CD4-positive, alpha-beta T cell (primary cell): ENCODE measurements at regions of chr17 and their contacts with region 1.

Region 1: GRCh38 chr17:8222630-8223356 is 12.4 kb upstream of the AURKB start:
- DNase-seq: peak; percentile 82 to 94 (median 88)
- ATAC-seq: peak; percentile 48
- H3K4me3 ChIP-seq: peak overlapping the region; percentile 75
- H3K4me3 Mint-ChIP-seq: peak overlapping the region; percentile 98
- H3K27ac ChIP-seq: peak overlapping the region; percentile 89 to 95
- H3K27ac Mint-ChIP-seq: peak overlapping the region; percentile 99
- H3K4me1 ChIP-seq: peaks cover 75% of the 10 kb centered on the region
- H3K4me1 Mint-ChIP-seq: peaks cover 74% of the 10 kb centered on the region
- H3K27me3 ChIP-seq: no peaks in the 10 kb centered on the region
- H3K27me3 Mint-ChIP-seq: peaks cover 42% of the 10 kb centered on the region
- CTCF ChIP-seq: no peak

Region 2: GRCh38 chr17:8138672-8139371 is 84.0 kb before region 1 on chr17:
- CTCF ChIA-PET with region 1: interaction called, 24 read pairs
- POLR2A ChIA-PET with region 1: interaction called, 53 read pairs
- intact Hi-C with region 1: loop called (anchors 1 to 5 kb)
- DNase-seq: peak; percentile 91 to 97 (median 95)
- ATAC-seq: peak; percentile 86
- H3K4me3 ChIP-seq: peak overlapping the region; percentile 71
- H3K4me3 Mint-ChIP-seq: no peak overlapping the region
- H3K27ac ChIP-seq: peak overlapping the region; percentile 71 to 91
- H3K27ac Mint-ChIP-seq: no peak overlapping the region
- H3K4me1 ChIP-seq: peaks cover 26% of the 10 kb centered on the region
- H3K4me1 Mint-ChIP-seq: peaks cover 2% of the 10 kb centered on the region
- H3K27me3 ChIP-seq: no peaks in the 10 kb centered on the region
- H3K27me3 Mint-ChIP-seq: peaks cover 2% of the 10 kb centered on the region
- CTCF ChIP-seq: peak; percentile 75

Region 3: DNA sequence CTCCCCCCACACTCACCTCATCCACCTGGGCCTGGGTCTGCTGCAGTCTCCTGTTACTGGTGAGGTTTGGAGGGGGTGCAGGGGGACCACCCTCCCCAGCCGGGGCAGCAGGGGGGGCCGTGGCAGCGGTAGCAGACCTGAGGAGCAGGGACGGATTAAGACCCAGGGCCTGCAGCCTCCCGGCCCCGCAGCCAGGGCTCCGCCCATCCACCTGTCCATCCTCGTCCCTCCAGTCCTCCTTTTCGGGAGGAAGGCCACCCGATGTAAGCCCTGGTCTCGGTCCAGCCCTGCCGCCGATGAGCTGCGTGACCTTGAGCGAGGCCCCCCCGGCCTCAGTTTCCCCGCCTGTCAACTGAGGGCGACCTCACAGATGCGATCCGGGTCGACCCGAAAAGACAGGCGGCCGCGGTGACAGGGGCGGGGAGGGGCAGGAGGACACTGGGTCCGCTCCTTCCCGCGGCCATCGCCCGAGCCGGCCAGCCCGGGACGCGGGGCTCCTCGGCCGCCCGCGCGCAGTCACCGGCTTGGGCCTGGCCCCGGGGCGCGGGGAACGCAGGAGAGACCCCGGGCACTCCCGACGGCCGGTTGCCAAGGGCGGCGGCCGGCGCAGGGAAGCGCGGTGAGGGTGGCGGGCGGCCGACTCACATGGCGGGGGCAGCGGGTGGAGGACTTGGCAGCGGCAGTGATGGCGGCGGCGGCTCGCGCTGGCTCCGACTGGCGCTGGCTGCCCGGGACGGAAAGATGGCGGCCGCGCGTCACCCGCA is 60.4 kb before region 1 on chr17 and contains the start of gene VAMP2:
- CTCF ChIA-PET with region 1: interaction called, 4 read pairs
- POLR2A ChIA-PET with region 1: interaction called, 135 read pairs
- intact Hi-C with region 1: no loop called
- DNase-seq: peak; percentile 71 to 95 (median 83)
- ATAC-seq: peak; percentile 47
- H3K4me3 ChIP-seq: peak within 1 kb of the TSS; percentile 86
- H3K4me3 Mint-ChIP-seq: peak within 1 kb of the TSS; percentile 95
- H3K27ac ChIP-seq: peak within 1 kb of the TSS; percentile 94 to 96
- H3K27ac Mint-ChIP-seq: no peak within 1 kb of the TSS
- H3K4me1 ChIP-seq: peaks cover 72% of the 10 kb centered on the region
- H3K4me1 Mint-ChIP-seq: peaks cover 67% of the 10 kb centered on the region
- H3K27me3 ChIP-seq: no peaks in the 10 kb centered on the region
- H3K27me3 Mint-ChIP-seq: no peaks in the 10 kb centered on the region
- CTCF ChIP-seq: no peak
- total RNA-seq, gene VAMP2: 351 to 366 TPM

Region 4: DNA sequence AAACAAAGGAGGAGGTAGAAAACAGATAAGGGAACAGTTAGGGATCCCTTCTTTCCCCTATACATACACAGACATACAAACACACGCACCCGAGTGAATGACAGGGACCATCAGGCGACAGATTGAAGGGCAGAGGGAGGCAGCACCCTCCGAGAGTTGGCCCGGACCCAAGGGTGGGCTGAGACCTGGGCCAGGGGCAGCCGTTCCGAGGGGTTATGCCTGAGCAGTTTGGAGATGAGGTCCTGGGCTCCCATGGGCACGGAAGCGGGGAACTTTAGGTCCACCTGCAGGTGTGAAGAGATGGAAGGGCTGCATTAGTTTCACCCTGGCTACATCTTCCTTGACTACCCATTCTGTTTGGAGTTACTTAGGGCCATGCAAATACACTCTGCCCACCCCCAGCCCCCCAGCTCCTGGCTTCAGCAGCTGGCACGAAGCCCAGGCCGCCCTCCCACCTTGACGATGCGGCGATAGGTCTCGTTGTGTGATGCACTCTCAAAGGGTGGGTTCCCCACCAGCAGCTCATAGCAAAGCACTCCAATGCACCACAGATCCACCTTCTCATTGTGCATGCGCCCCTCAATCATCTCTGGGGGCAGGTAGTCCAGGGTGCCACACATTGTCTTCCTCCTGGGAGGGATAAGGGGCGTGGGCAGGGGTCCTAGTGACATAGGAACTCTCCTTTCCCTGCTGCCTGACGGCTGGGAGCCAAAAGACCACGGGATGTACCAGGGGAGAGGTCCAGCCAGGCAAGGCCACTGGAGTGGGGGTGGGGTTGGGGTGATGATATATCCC is 17.8 kb before region 1 on chr17:
- CTCF ChIA-PET with region 1: interaction called, 5 read pairs
- POLR2A ChIA-PET with region 1: interaction called, 109 read pairs
- intact Hi-C with region 1: loop called in 1 of 2 experiments (anchors 1 kb)
- DNase-seq: no peak
- ATAC-seq: no peak
- H3K4me3 ChIP-seq: no peak overlapping the region
- H3K4me3 Mint-ChIP-seq: no peak overlapping the region
- H3K27ac ChIP-seq: no peak overlapping the region
- H3K27ac Mint-ChIP-seq: no peak overlapping the region
- H3K4me1 ChIP-seq: peaks cover 8% of the 10 kb centered on the region
- H3K4me1 Mint-ChIP-seq: peaks cover 7% of the 10 kb centered on the region
- H3K27me3 ChIP-seq: no peaks in the 10 kb centered on the region
- H3K27me3 Mint-ChIP-seq: no peaks in the 10 kb centered on the region
- CTCF ChIP-seq: no peak

Region 5: GRCh38 chr17:8248751-8249607 is 26.2 kb after region 1 on chr17 and contains the start of gene PFAS:
- CTCF ChIA-PET with region 1: interaction called, 14 read pairs
- POLR2A ChIA-PET with region 1: interaction called, 630 read pairs
- intact Hi-C with region 1: loop called (anchors 1 kb)
- DNase-seq: peak; percentile 87 to 98 (median 94)
- ATAC-seq: peak; percentile 35
- H3K4me3 ChIP-seq: peak within 1 kb of the TSS; percentile 75
- H3K4me3 Mint-ChIP-seq: peak within 1 kb of the TSS; percentile 98
- H3K27ac ChIP-seq: peak within 1 kb of the TSS; percentile 99 to 100
- H3K27ac Mint-ChIP-seq: peak within 1 kb of the TSS; percentile 100
- H3K4me1 ChIP-seq: peaks cover 53% of the 10 kb centered on the region
- H3K4me1 Mint-ChIP-seq: peaks cover 62% of the 10 kb centered on the region
- H3K27me3 ChIP-seq: no peaks in the 10 kb centered on the region
- H3K27me3 Mint-ChIP-seq: peaks cover 5% of the 10 kb centered on the region
- CTCF ChIP-seq: no peak
- total RNA-seq, gene PFAS: 22.3 to 23.0 TPM

Region 6: DNA sequence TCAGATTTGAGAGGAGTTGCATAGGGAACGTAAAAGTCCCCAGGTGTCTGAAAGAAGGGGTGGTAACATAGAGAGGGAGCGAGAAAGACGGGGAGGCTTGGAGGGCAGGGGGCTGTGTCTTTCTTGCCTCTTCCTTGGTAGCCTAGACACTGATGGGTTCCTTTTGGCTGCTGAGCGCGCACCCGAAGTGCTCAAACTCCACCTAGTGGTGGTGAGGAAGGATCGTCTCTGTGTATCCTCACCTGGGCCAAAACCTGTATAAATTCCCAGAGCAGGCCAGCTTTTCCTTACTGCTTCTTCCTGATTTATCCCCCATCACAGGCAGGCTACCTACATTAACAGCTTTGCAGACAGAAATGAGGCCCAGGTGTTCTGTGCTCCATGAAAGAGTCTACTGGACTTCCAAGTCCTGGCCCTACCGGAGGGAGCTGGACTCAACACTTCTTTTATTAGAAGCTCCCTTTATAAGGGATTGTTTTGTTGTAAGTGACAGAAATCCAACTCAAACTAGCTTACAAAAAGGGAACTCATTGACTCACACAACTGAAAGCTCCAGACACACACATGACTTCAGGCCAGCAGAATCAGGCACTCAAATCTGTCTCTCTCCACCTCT is 77.9 kb after region 1 on chr17:
- CTCF ChIA-PET with region 1: interaction called, 8 read pairs
- POLR2A ChIA-PET with region 1: interaction called, 66 read pairs
- intact Hi-C with region 1: loop called (anchors 1 kb)
- DNase-seq: peak; percentile 39 to 87 (median 58)
- ATAC-seq: peak; percentile 96
- H3K4me3 ChIP-seq: no peak overlapping the region
- H3K4me3 Mint-ChIP-seq: peak overlapping the region; percentile 49
- H3K27ac ChIP-seq: no peak overlapping the region
- H3K27ac Mint-ChIP-seq: peak overlapping the region; percentile 8
- H3K4me1 ChIP-seq: peaks cover 10% of the 10 kb centered on the region
- H3K4me1 Mint-ChIP-seq: peaks cover 13% of the 10 kb centered on the region
- H3K27me3 ChIP-seq: no peaks in the 10 kb centered on the region
- H3K27me3 Mint-ChIP-seq: no peaks in the 10 kb centered on the region
- CTCF ChIP-seq: peak; percentile 81